Transverse colon (tissue), 4 donors: ENCODE measurements at regions of chr11 and their contacts with region 1.

Region 1: GRCh38 chr11:106391771-106392420 is 314.4 kb downstream of the AASDHPPT start:
- DNase-seq: no peak
- H3K4me3 ChIP-seq: no peak overlapping the region
- H3K27ac ChIP-seq: no peak overlapping the region
- H3K4me1 ChIP-seq: no peaks in the 10 kb centered on the region
- H3K27me3 ChIP-seq: no peaks in the 10 kb centered on the region
- CTCF ChIP-seq: no peak
- EP300 ChIP-seq: no peak
- POLR2A ChIP-seq: no peak

Region 2: DNA sequence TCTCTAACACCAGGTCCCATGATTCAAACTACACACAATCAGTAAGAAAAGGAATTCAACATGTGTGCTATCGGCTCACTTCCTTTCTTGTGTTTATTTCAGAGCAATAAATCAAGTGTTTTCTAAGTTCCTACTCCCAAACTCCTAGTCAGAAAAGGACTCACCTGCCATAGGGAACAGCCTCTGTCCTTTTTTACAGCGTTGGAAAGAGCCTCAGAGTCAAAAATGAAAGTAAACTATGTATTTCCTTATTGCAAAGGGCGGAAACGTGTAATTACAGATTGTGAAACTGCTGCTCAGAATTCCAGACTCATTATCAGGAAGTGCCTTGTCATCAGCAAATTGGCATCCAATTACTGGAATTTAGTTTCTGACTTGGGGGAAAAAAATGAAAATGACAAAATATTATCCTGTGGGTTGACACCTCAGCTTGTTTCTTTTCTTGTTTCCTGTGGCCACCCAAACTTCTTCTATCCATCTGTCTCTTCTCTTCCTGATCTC is 1423.5 kb before region 1 on chr11 and contains the start of gene CASP4:
- in situ Hi-C with region 1: no loop called
- intact Hi-C with region 1: loop called (anchors 5 kb)
- DNase-seq: peak; percentile 16
- H3K4me3 ChIP-seq: peak within 1 kb of the TSS; percentile 21 to 62 (median 35)
- H3K27ac ChIP-seq: peak within 1 kb of the TSS; percentile 84 to 94 (median 87)
- H3K4me1 ChIP-seq: peaks cover 15 to 29% (median 18%) of the 10 kb centered on the region in 4 donors
- H3K27me3 ChIP-seq: no peaks in the 10 kb centered on the region
- CTCF ChIP-seq: no peak
- EP300 ChIP-seq: no peak
- POLR2A ChIP-seq: peak; percentile 63
- total RNA-seq, gene CASP4: 36.4 to 86.3 (median 49.8) TPM

Region 3: DNA sequence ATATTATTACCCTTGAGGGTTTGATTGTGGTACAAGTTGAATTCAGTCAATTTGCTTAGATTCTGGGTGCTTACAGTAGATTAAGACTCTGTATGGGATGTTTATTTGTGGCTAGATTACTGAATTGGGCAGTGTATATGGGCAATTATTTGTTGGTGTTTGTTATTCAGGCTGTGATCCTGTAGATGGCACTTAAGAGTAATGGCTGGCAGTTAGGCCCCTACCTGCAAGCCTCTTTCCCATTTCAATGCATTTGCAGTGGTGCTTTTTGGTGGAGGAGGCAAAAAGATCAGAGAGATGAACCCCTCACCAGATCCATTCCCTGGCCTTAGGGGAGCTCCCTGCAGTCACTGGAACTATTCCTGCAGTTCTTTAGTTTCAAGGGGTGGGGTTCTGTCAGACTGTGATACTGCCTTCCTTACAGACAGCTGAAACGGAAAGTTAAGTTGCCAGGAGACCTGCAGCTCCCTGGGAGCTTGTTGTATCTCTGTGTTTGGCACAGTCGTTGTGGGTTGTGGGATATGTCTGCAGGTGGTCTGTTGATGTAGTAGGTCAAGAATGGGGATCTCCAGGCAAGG is 114.9 kb before region 1 on chr11:
- in situ Hi-C with region 1: no loop called
- intact Hi-C with region 1: no loop called
- DNase-seq: no peak
- H3K4me3 ChIP-seq: no peak overlapping the region
- H3K27ac ChIP-seq: no peak overlapping the region
- H3K4me1 ChIP-seq: no peaks in the 10 kb centered on the region
- H3K27me3 ChIP-seq: no peaks in the 10 kb centered on the region
- CTCF ChIP-seq: no peak
- EP300 ChIP-seq: no peak
- POLR2A ChIP-seq: no peak